ENCODE measurements at regions of chr3 and their contacts with region 1.

Region 1: DNA sequence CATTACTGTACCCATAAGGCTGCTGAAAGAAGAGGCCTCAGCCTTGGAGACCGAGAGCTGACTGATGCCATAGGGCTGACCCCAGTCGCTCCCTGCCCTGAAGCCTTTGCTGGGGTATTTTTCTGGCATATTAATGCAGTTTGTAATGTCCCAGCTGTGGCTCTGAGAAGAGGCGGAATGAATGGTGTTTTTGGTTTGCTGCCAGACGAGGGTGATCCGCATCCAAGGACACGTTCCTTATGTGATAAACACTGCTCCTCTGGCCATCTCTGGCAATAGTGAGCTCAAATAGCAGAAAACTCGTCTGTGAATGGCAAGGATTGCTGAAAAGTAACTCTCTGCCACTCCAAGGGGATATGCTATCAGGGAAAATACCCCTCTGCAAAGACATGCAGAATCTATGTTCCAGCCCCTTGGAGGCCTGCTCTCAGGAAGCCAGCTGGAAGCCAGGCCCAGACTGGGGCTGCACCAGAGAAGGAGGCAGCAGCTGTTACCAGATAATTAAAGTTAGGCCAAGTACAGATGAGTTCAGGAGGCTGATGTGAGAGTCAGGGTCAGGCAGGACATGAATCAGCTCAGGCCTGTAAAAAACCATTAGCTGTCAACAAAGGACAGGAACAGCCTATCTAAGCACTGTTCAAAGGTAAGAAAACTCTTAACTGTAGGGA is 28.9 kb upstream of the KLHL6 start:
- DNase-seq: peak; percentile 72
- ATAC-seq: peak; percentile 72

Region 2: GRCh38 chr3:183629546-183630301 is 45.3 kb after region 1 on chr3:
- intact Hi-C with region 1: loop called (anchors 5 kb)
- DNase-seq: no peak
- ATAC-seq: peak; percentile 54

Measured in Right ventricle myocardium superior (tissue), 1 donor.